Heart left ventricle (tissue), 16 donors: ENCODE measurements at regions of chr3 and their contacts with region 1.

Region 1: GRCh38 chr3:161104561-161105551 is at the start of gene B3GALNT1:
- DNase-seq: peak; percentile 52 to 78 (median 70)
- ATAC-seq: peak; percentile 21 to 83 (median 63)
- H3K4me3 ChIP-seq: peak within 1 kb of the TSS; percentile 65 to 96 (median 78)
- H3K27ac ChIP-seq: peak within 1 kb of the TSS; percentile 73 to 95 (median 86)
- H3K4me1 ChIP-seq: peaks cover 0 to 45% (median 18%) of the 10 kb centered on the region in 12 donors
- H3K27me3 ChIP-seq: no peaks in the 10 kb centered on the region
- CTCF ChIP-seq: peak in 1 of 12 donors; percentile 11
- POLR2A ChIP-seq: peak in 1 of 2 donors; percentile 24
- total RNA-seq, gene B3GALNT1: 42.0 to 94.6 (median 67.0) TPM

Region 2: GRCh38 chr3:160956806-160957205 is 148.1 kb before region 1 on chr3:
- intact Hi-C with region 1: loop called in 2 of 10 experiments (anchors 10 kb)
- DNase-seq: no peak
- ATAC-seq: peak in 2 of 4 donors; percentile 46 to 51
- H3K4me3 ChIP-seq: no peak overlapping the region
- H3K27ac ChIP-seq: no peak overlapping the region
- H3K4me1 ChIP-seq: peaks cover 0 to 20% (median 8%) of the 10 kb centered on the region in 12 donors
- H3K27me3 ChIP-seq: no peaks in the 10 kb centered on the region
- CTCF ChIP-seq: peak in 8 of 12 donors; percentile 5 to 35 (median 23)
- POLR2A ChIP-seq: no peak

Region 3: GRCh38 chr3:161054860-161055604 is 49.8 kb before region 1 on chr3:
- intact Hi-C with region 1: no loop called
- DNase-seq: no peak
- ATAC-seq: no peak
- H3K4me3 ChIP-seq: no peak overlapping the region
- H3K27ac ChIP-seq: no peak overlapping the region
- H3K4me1 ChIP-seq: no peaks in the 10 kb centered on the region
- H3K27me3 ChIP-seq: no peaks in the 10 kb centered on the region
- CTCF ChIP-seq: no peak
- POLR2A ChIP-seq: no peak

Region 4: GRCh38 chr3:161126495-161126894 is 21.6 kb after region 1 on chr3:
- intact Hi-C with region 1: no loop called
- DNase-seq: no peak
- ATAC-seq: peak in 1 of 4 donors; percentile 18
- H3K4me3 ChIP-seq: no peak overlapping the region
- H3K27ac ChIP-seq: peak overlapping the region in 1 of 12 donors; percentile 13
- H3K4me1 ChIP-seq: peaks cover 0 to 10% (median 2%) of the 10 kb centered on the region in 12 donors
- H3K27me3 ChIP-seq: no peaks in the 10 kb centered on the region
- CTCF ChIP-seq: no peak
- POLR2A ChIP-seq: no peak

Region 5: DNA sequence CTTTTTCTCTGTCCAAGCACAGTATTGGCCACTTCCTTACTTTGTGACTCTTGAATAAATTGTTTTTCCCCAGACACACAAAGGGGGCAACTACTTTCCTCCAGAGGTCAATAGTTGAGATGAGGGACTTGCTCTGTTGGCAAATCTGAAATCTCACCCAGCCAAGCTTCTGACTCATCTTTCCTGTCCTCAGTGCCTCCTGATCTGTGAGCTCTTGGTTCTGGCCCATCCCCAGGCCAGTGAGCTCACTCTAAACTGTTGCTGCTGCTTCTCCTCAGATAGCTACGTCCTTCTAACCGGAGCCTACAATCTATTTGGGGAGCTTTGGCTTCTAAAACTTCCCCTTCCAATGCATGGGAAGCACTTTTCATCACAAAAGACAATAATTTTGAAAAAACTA is 66.3 kb after region 1 on chr3:
- intact Hi-C with region 1: loop called in 1 of 10 experiments (anchors 2 kb)
- DNase-seq: peak in 4 of 5 donors; percentile 43 to 87 (median 68)
- ATAC-seq: peak; percentile 94 to 99 (median 98)
- H3K4me3 ChIP-seq: no peak overlapping the region
- H3K27ac ChIP-seq: peak overlapping the region in 7 of 12 donors; percentile 17 to 69 (median 48)
- H3K4me1 ChIP-seq: peaks cover 0 to 18% (median 10%) of the 10 kb centered on the region in 12 donors
- H3K27me3 ChIP-seq: no peaks in the 10 kb centered on the region
- CTCF ChIP-seq: no peak
- POLR2A ChIP-seq: no peak

Region 6: GRCh38 chr3:161220850-161221753 is 116.2 kb after region 1 on chr3 and contains the start of gene NMD3:
- intact Hi-C with region 1: loop called in 5 of 10 experiments (anchors 5 to 10 kb)
- DNase-seq: peak; percentile 96 to 97 (median 97)
- ATAC-seq: peak; percentile 97 to 98 (median 98)
- H3K4me3 ChIP-seq: peak within 1 kb of the TSS; percentile 66 to 96 (median 80)
- H3K27ac ChIP-seq: peak within 1 kb of the TSS; percentile 82 to 99 (median 91)
- H3K4me1 ChIP-seq: peaks cover 6 to 49% (median 35%) of the 10 kb centered on the region in 12 donors
- H3K27me3 ChIP-seq: no peaks in the 10 kb centered on the region
- CTCF ChIP-seq: peak in 1 of 12 donors; percentile 1
- POLR2A ChIP-seq: peak; percentile 79 to 92
- total RNA-seq, gene NMD3: 28.9 to 74.9 (median 57.6) TPM